ENCODE measurements at regions of chr17 and their contacts with region 1.

Region 1: GRCh38 chr17:1399679-1400512 is at the start of gene YWHAE:
- H3K4me3 ChIP-seq: peak within 1 kb of the TSS; percentile 93
- H3K27ac ChIP-seq: peak within 1 kb of the TSS; percentile 100
- H3K4me1 ChIP-seq: peaks cover 12% of the 10 kb centered on the region
- CTCF ChIP-seq: no peak

Region 2: DNA sequence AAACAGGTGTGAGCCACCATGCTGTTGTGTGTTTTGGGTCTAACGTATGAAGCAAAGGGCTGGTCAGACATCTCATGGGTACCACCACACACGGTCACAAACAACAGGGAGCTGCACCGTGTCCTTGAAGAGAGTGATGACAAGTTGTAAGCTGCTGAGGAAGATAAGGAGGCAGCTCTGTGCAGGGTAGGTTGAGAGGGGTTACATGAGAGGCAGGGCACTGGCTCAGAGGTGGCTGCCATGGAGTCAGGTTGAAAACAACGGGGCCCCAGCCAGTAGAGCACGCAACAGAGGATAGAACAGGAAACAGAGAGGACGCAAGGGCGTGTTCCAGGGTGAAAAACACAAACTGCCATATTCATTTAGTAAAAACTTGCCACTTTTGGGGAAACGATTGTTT is 68.2 kb before region 1 on chr17:
- CTCF ChIA-PET with region 1: no interaction called
- POLR2A ChIA-PET with region 1: no interaction called
- H3K4me3 ChIP-seq: no peak overlapping the region
- H3K27ac ChIP-seq: no peak overlapping the region
- H3K4me1 ChIP-seq: no peaks in the 10 kb centered on the region
- CTCF ChIP-seq: no peak

Region 3: DNA sequence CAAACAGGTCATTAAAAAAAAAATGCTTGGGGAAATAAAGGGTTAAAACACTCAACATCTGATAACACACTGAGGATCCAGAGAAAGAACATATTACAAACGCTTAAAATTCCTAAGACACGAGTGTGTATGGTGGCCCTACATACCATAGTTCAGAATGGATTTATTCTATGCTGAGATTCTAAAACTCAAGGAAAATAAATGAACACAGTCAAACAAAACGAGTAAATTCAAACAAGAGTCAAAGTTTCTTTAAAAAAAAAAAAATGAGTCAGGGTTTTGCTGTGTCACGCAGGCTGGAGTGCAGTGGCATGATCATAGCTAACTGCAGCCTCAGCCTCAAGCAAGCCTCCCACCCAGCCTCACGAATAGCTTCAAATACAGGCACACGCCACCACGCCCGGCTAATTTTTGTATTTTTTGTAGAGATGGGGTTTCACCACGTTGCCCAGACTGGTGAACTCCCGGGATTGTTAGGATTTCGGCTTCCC is 38.7 kb after region 1 on chr17:
- CTCF ChIA-PET with region 1: interaction called, 3 read pairs
- POLR2A ChIA-PET with region 1: interaction called, 17 read pairs
- H3K4me3 ChIP-seq: no peak overlapping the region
- H3K27ac ChIP-seq: no peak overlapping the region
- H3K4me1 ChIP-seq: no peaks in the 10 kb centered on the region
- CTCF ChIP-seq: no peak

Region 4: DNA sequence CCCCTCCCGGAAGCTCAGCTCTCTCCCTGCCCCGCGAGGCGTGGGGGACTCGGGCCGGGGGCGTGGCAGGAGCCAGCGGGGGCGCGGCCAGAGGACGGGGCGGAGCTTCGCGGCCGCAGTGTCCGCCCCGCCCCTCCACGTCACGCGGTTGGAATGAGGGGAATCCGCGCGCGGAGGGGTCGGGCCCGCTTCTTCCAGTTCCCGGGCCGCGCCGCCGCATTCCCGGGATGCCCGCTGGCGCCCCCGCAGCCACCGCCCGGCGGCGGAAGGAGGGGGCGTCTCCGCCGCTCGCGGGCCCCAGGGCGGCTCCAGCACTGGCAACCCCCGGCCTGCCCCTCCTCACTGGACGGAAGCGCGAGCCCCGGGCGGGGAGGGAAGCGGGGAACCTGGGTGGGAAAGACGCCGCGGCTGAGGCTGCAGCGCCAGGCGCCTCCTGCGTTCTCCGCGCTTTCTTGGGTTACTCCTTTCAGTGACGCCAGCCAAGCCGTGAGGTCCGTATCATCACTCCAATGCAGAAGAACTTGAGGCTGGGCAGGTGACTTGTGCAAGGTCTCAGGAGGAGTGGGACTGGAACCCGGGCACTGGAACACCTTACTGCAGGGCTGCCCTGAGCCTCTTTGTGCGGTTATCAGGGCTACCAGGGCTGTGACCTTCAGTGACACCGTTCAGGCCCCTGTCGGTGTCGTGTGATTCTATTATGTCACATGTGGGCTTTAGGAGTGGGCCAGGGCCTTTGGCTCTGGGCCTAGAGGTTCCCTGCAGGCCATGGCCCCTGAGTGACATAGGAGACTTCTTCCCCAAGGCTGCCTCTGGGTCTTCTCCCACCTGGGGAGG is 88.4 kb after region 1 on chr17:
- CTCF ChIA-PET with region 1: no interaction called
- POLR2A ChIA-PET with region 1: interaction called, 12 read pairs
- H3K4me3 ChIP-seq: peak overlapping the region; percentile 45
- H3K27ac ChIP-seq: peak overlapping the region; percentile 70; the same call in 1 of the 2 replicates
- H3K4me1 ChIP-seq: peaks cover 6% of the 10 kb centered on the region; the same call in 1 of the 2 replicates
- CTCF ChIP-seq: peak; percentile 37; the same call in 1 of the 2 replicates

Region 5: DNA sequence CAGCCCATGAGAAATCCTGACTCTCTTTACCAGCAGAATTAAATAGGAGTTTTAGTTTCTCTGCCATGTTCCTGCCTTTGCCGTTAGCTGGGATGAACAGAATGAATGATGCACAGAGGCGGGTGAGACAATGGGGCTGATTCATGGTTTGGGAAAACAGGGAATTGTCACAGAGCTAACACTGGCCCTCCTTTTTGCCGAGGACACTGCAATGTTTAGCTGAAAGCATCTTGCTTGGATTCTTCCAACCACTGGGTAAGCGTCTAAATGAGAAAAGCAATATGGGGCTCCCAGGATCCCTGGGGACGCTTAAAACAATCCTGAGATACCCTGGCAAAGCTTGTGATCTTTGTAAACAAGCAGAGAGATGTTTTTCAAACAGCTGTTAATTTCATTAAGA is 1180.8 kb after region 1 on chr17:
- CTCF ChIA-PET with region 1: no interaction called
- POLR2A ChIA-PET with region 1: interaction called, 10 read pairs
- H3K4me3 ChIP-seq: no peak overlapping the region
- H3K27ac ChIP-seq: no peak overlapping the region
- H3K4me1 ChIP-seq: no peaks in the 10 kb centered on the region
- CTCF ChIP-seq: no peak

Measured in HEK293 (cell line).